Activated B cell treated with CpG ODN at 0.5 μM for 24 hours (primary cell): ENCODE measurements at regions of chr6 and their contacts with region 1.

Region 1: GRCh38 chr6:105835373-105835772 is 250.8 kb upstream of the PRDM1 start:
- DNase-seq: no peak
- ATAC-seq: peak; percentile 52
- H3K4me3 Mint-ChIP-seq: no peak overlapping the region
- H3K27ac Mint-ChIP-seq: no peak overlapping the region
- H3K4me1 Mint-ChIP-seq: peaks cover 20% of the 10 kb centered on the region
- H3K27me3 Mint-ChIP-seq: no peaks in the 10 kb centered on the region
- CTCF ChIP-seq: no peak

Region 2: DNA sequence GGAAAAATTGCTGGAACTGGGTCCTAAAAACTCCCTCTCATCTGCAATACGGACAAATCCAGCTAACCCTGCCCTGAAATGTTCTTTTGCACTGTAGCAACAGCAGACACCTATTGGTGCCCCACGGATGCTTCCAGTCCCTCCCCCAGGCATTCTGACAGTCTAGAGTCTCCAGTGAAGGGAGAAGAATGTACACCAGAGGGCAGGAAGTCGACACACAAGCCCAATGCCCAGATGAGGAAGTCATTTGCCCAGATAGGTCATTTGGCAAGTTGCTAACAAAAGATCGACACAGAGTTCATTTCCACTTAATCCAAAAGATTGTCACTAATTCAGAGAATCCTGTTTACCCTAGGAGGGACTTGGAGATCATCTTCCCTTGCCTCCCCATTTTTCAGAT is 42.2 kb before region 1 on chr6:
- CTCF ChIA-PET with region 1: no interaction called
- POLR2A ChIA-PET with region 1: interaction called, 10 read pairs
- intact Hi-C with region 1: no loop called
- DNase-seq: no peak
- ATAC-seq: peak; percentile 88
- H3K4me3 Mint-ChIP-seq: no peak overlapping the region
- H3K27ac Mint-ChIP-seq: no peak overlapping the region
- H3K4me1 Mint-ChIP-seq: peaks cover 20% of the 10 kb centered on the region
- H3K27me3 Mint-ChIP-seq: no peaks in the 10 kb centered on the region
- CTCF ChIP-seq: no peak

Region 3: GRCh38 chr6:105824732-105825131 is 10.6 kb before region 1 on chr6:
- CTCF ChIA-PET with region 1: no interaction called
- POLR2A ChIA-PET with region 1: no interaction called
- intact Hi-C with region 1: no loop called
- DNase-seq: no peak
- ATAC-seq: no peak
- H3K4me3 Mint-ChIP-seq: no peak overlapping the region
- H3K27ac Mint-ChIP-seq: no peak overlapping the region
- H3K4me1 Mint-ChIP-seq: peaks cover 4% of the 10 kb centered on the region
- H3K27me3 Mint-ChIP-seq: no peaks in the 10 kb centered on the region
- CTCF ChIP-seq: no peak